WTC11 (cell line): ENCODE measurements at regions of chr6 and their contacts with region 1.

Region 1: GRCh38 chr6:107847844-107848802 is 24.0 kb upstream of the SCML4 start:
- DNase-seq: peak; percentile 95
- ATAC-seq: peak; percentile 92
- H3K4me3 Mint-ChIP-seq: peak overlapping the region; percentile 79
- H3K27ac Mint-ChIP-seq: no peak overlapping the region
- H3K4me1 Mint-ChIP-seq: peaks cover 11% of the 10 kb centered on the region
- H3K27me3 Mint-ChIP-seq: peaks cover 23% of the 10 kb centered on the region
- CTCF ChIP-seq: peak; percentile 98

Region 2: GRCh38 chr6:107679457-107679856 is 168.7 kb before region 1 on chr6:
- CTCF ChIA-PET with region 1: interaction called, 20 read pairs
- POLR2A ChIA-PET with region 1: no interaction called
- DNase-seq: peak; percentile 59
- ATAC-seq: peak; percentile 89
- H3K4me3 Mint-ChIP-seq: no peak overlapping the region
- H3K27ac Mint-ChIP-seq: no peak overlapping the region
- H3K4me1 Mint-ChIP-seq: peaks cover 20% of the 10 kb centered on the region
- H3K27me3 Mint-ChIP-seq: peaks cover 13% of the 10 kb centered on the region
- CTCF ChIP-seq: no peak

Region 3: DNA sequence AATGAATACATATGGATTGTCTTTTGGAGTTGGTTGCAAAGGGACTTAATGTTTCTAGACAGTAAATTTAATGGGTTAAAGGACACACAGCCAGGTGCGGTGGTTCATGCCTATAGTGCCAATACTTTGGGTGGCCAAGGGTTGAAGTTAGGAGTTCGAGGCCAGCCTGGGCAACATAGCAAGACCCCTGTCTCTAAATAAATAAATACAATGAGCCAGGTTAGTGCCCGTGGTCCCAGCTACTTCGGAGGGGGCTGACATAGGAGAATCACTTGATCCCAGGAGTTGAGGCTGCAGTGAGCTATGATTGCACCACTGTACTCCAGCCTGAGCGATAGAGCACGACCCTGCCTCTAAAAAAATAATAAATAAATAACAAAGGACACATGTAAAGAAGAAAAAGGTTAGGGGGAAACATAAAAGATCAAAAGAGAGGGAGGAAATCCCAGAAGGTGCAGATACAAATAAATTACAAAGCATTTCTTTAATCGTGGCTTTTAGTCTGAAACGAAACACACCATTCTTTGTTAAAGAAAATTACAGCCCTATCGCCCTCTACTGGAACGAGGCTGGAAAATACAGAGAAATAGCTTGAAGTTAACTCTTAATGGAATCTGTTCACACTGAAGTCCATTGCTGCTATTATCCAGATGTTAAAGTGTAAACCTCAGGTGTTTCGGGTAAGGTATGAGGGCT is 18.6 kb after region 1 on chr6:
- CTCF ChIA-PET with region 1: interaction called, 21 read pairs
- POLR2A ChIA-PET with region 1: no interaction called
- DNase-seq: no peak
- ATAC-seq: peak; percentile 51
- H3K4me3 Mint-ChIP-seq: no peak overlapping the region
- H3K27ac Mint-ChIP-seq: peak overlapping the region; percentile 66; the same call in 1 of the 2 replicates
- H3K4me1 Mint-ChIP-seq: peaks cover 49% of the 10 kb centered on the region
- H3K27me3 Mint-ChIP-seq: no peaks in the 10 kb centered on the region
- CTCF ChIP-seq: no peak; the same call in 1 of the 2 replicates